Aorta (tissue), 5 donors: ENCODE measurements at regions of chr1 and their contacts with region 1.

Region 1: DNA sequence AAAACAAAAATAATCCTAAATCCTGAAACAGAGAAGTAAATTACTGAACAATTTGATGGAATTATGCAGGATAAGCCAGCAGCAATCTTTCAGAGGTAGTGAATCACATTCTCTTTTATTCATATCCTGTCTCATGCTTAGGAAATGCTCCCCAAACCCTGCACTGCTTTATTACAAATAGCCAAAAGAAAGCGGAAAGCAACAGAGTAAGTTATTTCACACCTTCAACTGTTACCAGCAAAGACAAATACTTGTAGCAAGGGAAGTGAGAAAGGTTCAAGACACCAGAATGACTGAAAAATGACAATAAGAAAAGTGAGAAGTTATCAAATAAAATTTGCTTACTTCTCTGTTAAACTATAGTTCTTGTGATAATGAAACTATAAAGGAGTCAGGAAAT is 6.2 kb downstream of the ZRANB2 start:
- DNase-seq: no peak
- ATAC-seq: no peak
- H3K4me3 ChIP-seq: no peak overlapping the region
- H3K27ac ChIP-seq: no peak overlapping the region
- H3K4me1 ChIP-seq: no peaks in the 10 kb centered on the region
- H3K27me3 ChIP-seq: no peaks in the 10 kb centered on the region

Region 2: GRCh38 chr1:70234733-70235132 is 839.9 kb before region 1 on chr1:
- intact Hi-C with region 1: loop called in 1 of 2 experiments (anchors 10 kb)
- DNase-seq: no peak
- ATAC-seq: no peak
- H3K4me3 ChIP-seq: no peak overlapping the region
- H3K27ac ChIP-seq: no peak overlapping the region
- H3K4me1 ChIP-seq: no peaks in the 10 kb centered on the region
- H3K27me3 ChIP-seq: no peaks in the 10 kb centered on the region

Region 3: GRCh38 chr1:70436622-70437251 is 637.9 kb before region 1 on chr1:
- intact Hi-C with region 1: loop called in 1 of 2 experiments (anchors 10 kb)
- DNase-seq: no peak
- ATAC-seq: no peak
- H3K4me3 ChIP-seq: no peak overlapping the region
- H3K27ac ChIP-seq: no peak overlapping the region
- H3K4me1 ChIP-seq: no peaks in the 10 kb centered on the region
- H3K27me3 ChIP-seq: no peaks in the 10 kb centered on the region